Heart left ventricle (tissue), 16 donors: ENCODE measurements at regions of chr15 and their contacts with region 1.

Region 1: GRCh38 chr15:73081321-73081958 is 29.2 kb downstream of the NEO1 start:
- DNase-seq: peak in 1 of 5 donors; percentile 20
- ATAC-seq: peak in 2 of 4 donors; percentile 52 to 56
- H3K4me3 ChIP-seq: no peak overlapping the region
- H3K27ac ChIP-seq: no peak overlapping the region
- H3K4me1 ChIP-seq: peaks cover 0 to 17% (median 8%) of the 10 kb centered on the region in 12 donors
- H3K27me3 ChIP-seq: peaks cover 0 to 14% (median 0%) of the 10 kb centered on the region in 9 donors
- CTCF ChIP-seq: peak; percentile 48 to 84 (median 74)
- POLR2A ChIP-seq: no peak

Region 2: GRCh38 chr15:72722071-72722696 is 359.3 kb before region 1 on chr15:
- intact Hi-C with region 1: loop called in 4 of 10 experiments (anchors 5 to 10 kb)
- DNase-seq: peak; percentile 40 to 61 (median 48)
- ATAC-seq: peak in 1 of 4 donors; percentile 39
- H3K4me3 ChIP-seq: no peak overlapping the region
- H3K27ac ChIP-seq: no peak overlapping the region
- H3K4me1 ChIP-seq: no peaks in the 10 kb centered on the region
- H3K27me3 ChIP-seq: no peaks in the 10 kb centered on the region
- CTCF ChIP-seq: peak; percentile 29 to 77 (median 66)
- POLR2A ChIP-seq: no peak

Region 3: DNA sequence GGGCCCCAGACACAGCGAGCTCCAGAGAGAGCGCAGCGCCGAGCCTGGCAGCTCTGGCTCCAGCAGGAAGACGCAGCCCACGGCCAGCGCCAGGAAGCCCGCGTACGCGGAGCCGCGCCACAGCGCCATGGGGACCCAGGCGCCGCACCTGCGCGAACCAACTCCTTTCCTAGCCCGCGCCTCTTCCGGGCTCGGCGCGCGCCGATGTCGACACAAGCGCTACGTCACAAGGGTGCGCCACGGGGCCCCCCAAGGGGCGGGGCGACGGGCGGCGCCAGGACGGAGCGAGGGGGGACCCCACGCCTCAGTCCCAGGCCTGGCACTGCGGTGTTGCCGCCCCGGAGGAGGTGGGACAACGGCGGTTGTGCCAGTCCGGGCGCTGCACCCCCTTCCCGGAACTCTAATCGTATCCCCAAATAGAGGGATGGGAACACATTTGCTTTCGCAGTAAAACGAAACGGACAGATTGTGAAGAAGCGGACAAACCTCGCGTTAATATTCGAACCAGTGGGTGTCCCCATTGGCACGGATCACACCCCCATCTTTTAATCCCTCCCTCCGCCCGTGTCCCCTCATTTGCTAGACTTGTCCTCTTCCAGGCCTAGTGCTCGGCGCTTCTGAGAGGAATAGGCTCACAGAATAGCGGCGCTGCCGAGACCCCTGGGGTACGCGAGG is 297.7 kb before region 1 on chr15 and contains the start of gene ADPGK:
- intact Hi-C with region 1: loop called in 4 of 10 experiments (anchors 5 kb)
- DNase-seq: peak; percentile 91 to 96 (median 92)
- ATAC-seq: peak; percentile 97 to 98 (median 98)
- H3K4me3 ChIP-seq: peak within 1 kb of the TSS; percentile 77 to 100 (median 90)
- H3K27ac ChIP-seq: peak within 1 kb of the TSS; percentile 78 to 98 (median 88)
- H3K4me1 ChIP-seq: peaks cover 0 to 40% (median 23%) of the 10 kb centered on the region in 12 donors
- H3K27me3 ChIP-seq: no peaks in the 10 kb centered on the region
- CTCF ChIP-seq: no peak
- POLR2A ChIP-seq: peak in 1 of 2 donors; percentile 87
- total RNA-seq, gene ADPGK: 7.1 to 31.7 (median 10.4) TPM

Region 4: DNA sequence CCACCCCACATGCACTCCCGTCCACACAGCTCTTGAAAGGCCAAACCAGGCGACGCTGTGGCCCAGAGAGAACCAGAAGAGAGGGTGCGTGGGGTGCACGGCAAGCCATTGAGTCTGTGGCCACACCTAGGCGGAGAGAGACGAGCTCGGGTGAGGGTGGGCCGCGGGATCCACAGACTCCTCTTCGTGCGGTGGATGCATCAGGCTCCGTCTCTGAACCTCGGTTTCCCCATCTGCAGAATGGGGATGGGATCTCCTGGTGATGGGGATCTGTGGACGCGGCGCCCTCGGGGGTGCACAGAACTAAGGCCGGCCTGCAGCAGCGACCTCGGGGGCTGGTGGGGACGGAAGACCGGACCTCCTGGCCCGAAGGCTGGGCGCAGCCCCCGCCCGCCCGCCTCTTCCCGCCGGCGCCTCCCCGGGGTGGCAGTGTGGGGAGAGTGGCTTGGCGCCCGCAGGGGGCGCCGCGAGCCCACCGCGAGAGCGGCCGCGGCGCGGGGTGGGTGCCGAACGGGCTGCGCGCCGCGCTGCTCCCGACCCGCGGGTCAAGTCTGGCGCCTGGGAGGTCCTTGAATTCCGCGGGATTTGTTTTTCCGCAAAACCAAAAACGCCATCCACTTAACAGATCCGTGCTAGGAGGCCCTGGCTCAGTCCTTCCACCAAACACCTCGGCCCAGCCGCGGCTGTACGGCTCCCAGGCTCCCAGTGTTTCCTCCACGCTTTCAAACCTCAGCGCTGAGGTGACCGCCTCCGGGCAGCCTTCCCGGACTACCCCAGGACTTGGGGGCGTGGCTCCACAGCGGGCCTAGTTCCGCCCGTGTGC is 284.7 kb before region 1 on chr15:
- intact Hi-C with region 1: loop called (anchors 1 to 5 kb)
- DNase-seq: peak; percentile 33 to 73 (median 44)
- ATAC-seq: peak in 3 of 4 donors; percentile 87 to 97 (median 90)
- H3K4me3 ChIP-seq: peak overlapping the region; percentile 17 to 65 (median 52)
- H3K27ac ChIP-seq: peak overlapping the region in 1 of 12 donors; percentile 41
- H3K4me1 ChIP-seq: peaks cover 0 to 15% (median 0%) of the 10 kb centered on the region in 12 donors
- H3K27me3 ChIP-seq: peaks cover 0 to 50% (median 5%) of the 10 kb centered on the region in 9 donors
- CTCF ChIP-seq: peak; percentile 14 to 80 (median 68)
- POLR2A ChIP-seq: no peak